ENCODE measurements at regions of chr10 and their contacts with region 1.

Region 1: DNA sequence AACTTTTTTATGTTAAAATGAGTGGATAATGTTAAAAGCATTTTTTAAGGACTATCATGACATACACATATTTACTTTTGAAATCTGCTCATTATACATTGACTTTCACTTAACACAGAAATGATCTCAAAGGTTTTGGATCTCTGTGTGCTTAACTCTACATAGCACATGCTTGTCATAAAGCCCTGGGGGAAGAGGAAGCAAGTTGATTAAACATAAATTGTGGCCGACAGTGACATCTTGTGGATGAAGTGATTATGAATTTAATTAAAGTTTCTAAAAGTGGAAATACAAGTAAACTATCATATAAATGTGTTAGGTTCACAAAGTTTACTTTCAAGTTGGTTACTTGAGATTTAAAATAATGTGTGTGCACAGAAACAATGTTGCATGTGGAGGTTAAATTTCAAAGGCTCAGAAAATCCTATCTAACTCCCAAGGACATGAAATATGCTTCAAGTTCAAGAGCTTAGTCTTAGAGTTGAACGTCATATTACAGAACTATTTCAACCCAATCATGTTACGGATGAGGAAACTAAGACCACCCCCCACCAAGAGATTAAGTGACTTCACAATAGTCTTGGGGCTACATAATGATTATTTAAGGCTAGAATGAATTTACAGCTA is 1247.7 kb downstream of the GATA3 start:
- DNase-seq: peak; percentile 33
- ATAC-seq: peak; percentile 43; the same call in 2 of the 3 replicates
- H3K4me3 ChIP-seq: no peak overlapping the region
- H3K27ac ChIP-seq: no peak overlapping the region
- H3K4me1 ChIP-seq: no peaks in the 10 kb centered on the region
- H3K27me3 ChIP-seq: no peaks in the 10 kb centered on the region
- CTCF ChIP-seq: peak; percentile 42
- EP300 ChIP-seq: no peak
- POLR2A ChIP-seq: no peak
- RAD21 ChIP-seq: no peak

Region 2: DNA sequence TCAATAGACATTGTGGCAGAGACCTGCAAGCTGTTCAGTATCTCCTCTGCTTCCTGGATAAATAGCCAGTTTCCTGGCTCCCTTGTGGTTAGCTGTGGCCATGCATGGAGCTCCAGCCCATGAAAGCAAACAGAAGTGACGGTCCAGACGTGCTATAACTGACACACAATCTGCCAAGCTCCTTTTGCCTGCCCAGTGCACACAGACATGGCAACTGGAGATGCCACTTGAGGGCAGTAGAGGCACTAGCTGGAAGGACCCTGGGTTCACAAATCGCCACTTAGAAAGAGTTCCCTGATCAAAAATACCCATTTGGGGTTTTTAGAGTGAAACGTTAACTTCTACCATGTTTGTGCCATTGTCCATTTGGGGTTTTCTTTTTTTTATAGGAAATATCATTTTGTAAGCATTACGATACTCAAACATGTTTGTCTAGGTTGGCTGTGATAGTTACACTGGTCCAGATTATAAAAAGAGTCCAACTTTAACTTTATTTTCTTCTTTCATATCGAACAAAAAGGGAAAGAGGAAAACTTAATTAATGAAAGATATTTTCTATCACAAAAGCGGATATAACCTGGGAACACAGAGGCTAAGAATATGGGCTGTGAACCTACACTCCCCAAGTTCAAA is 1545.8 kb before region 1 on chr10:
- CTCF ChIA-PET with region 1: interaction called, 3 read pairs
- POLR2A ChIA-PET with region 1: no interaction called
- in situ Hi-C with region 1: loop called (anchors 25 kb)
- intact Hi-C with region 1: loop called (anchors 2 kb)
- DNase-seq: peak; percentile 41
- ATAC-seq: peak; percentile 87
- H3K4me3 ChIP-seq: no peak overlapping the region
- H3K27ac ChIP-seq: no peak overlapping the region
- H3K4me1 ChIP-seq: no peaks in the 10 kb centered on the region
- H3K27me3 ChIP-seq: no peaks in the 10 kb centered on the region
- CTCF ChIP-seq: peak; percentile 73
- EP300 ChIP-seq: no peak
- POLR2A ChIP-seq: no peak
- RAD21 ChIP-seq: peak; percentile 54; the same call in 1 of the 2 replicates

Region 3: DNA sequence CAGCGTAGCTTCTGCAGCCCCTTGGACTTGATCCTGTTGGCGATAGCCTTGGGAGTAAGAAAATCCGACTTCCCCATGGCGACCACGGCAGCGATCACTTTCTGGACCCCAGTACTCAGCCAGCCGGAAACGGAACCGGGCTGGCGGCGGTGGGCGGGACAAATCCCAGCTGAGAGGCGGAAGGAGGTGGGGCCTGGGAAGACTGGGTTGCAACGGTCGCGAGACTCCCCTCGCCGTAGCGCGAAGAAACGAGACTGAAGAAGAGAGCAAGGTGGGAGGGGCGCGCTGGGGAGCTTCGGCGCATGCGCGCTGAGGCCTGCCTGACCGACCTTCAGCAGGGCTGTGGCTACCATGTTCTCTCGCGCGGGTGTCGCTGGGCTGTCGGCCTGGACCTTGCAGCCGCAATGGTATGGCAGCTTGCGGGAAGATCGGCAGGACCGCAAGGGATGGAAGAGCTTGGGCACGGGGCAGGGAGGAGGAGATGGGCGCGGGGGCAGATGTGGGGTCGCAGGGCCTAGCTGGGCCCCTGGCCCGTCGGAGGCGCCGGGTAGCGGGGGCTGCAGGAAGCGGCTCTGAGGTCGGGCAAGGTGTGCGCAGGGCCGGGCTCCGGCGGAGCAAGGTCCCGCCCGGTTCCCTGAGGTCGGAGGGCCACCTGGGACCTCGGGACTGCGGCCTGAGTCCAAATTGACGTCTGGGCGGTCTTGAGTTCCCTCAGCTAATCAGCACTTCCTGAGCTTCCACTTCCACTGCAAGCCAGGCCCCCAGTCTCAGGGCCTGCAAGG is 1514.2 kb before region 1 on chr10 and contains the starts of genes ATP5F1C and KIN:
- CTCF ChIA-PET with region 1: no interaction called
- POLR2A ChIA-PET with region 1: no interaction called
- in situ Hi-C with region 1: no loop called
- intact Hi-C with region 1: loop called (anchors 10 kb)
- DNase-seq: peak; percentile 94
- ATAC-seq: peak; percentile 96
- H3K4me3 ChIP-seq: peak within 1 kb of the TSS; percentile 72 to 99 (median 96)
- H3K27ac ChIP-seq: peak within 1 kb of the TSS; percentile 87
- H3K4me1 ChIP-seq: peaks cover 62% of the 10 kb centered on the region
- H3K27me3 ChIP-seq: no peaks in the 10 kb centered on the region; a peak in 1 of 5 replicates
- CTCF ChIP-seq: no peak
- EP300 ChIP-seq: no peak
- POLR2A ChIP-seq: peak; percentile 90 to 96
- RAD21 ChIP-seq: peak; percentile 45
- total RNA-seq, gene ATP5F1C: 416 and 578 TPM in 2 replicates
- total RNA-seq, gene KIN: 23.2 and 34.6 TPM in 2 replicates

Region 4: GRCh38 chr10:7872041-7872442 is 1430.2 kb before region 1 on chr10:
- CTCF ChIA-PET with region 1: interaction called, 3 read pairs
- POLR2A ChIA-PET with region 1: no interaction called
- in situ Hi-C with region 1: loop called (anchors 10 kb)
- intact Hi-C with region 1: loop called (anchors 2 kb)
- DNase-seq: no peak
- ATAC-seq: no peak
- H3K4me3 ChIP-seq: no peak overlapping the region
- H3K27ac ChIP-seq: no peak overlapping the region
- H3K4me1 ChIP-seq: no peaks in the 10 kb centered on the region
- H3K27me3 ChIP-seq: no peaks in the 10 kb centered on the region
- CTCF ChIP-seq: peak; percentile 57
- EP300 ChIP-seq: no peak
- POLR2A ChIP-seq: no peak
- RAD21 ChIP-seq: peak; percentile 47; the same call in 1 of the 2 replicates

Region 5: GRCh38 chr10:8498884-8499283 is 803.3 kb before region 1 on chr10:
- CTCF ChIA-PET with region 1: no interaction called
- POLR2A ChIA-PET with region 1: no interaction called
- in situ Hi-C with region 1: no loop called
- intact Hi-C with region 1: no loop called
- DNase-seq: no peak
- ATAC-seq: no peak
- H3K4me3 ChIP-seq: no peak overlapping the region
- H3K27ac ChIP-seq: no peak overlapping the region
- H3K4me1 ChIP-seq: no peaks in the 10 kb centered on the region
- H3K27me3 ChIP-seq: peaks cover 0 to 1% of the 10 kb centered on the region in 2 experiments; a peak in 1 of 5 replicates
- CTCF ChIP-seq: no peak
- EP300 ChIP-seq: no peak
- POLR2A ChIP-seq: no peak
- RAD21 ChIP-seq: no peak

Region 6: GRCh38 chr10:9060314-9060713 is 241.9 kb before region 1 on chr10:
- CTCF ChIA-PET with region 1: no interaction called
- POLR2A ChIA-PET with region 1: no interaction called
- in situ Hi-C with region 1: no loop called
- intact Hi-C with region 1: no loop called
- DNase-seq: no peak
- ATAC-seq: no peak
- H3K4me3 ChIP-seq: no peak overlapping the region
- H3K27ac ChIP-seq: no peak overlapping the region
- H3K4me1 ChIP-seq: no peaks in the 10 kb centered on the region
- H3K27me3 ChIP-seq: no peaks in the 10 kb centered on the region
- CTCF ChIP-seq: no peak
- EP300 ChIP-seq: no peak
- POLR2A ChIP-seq: no peak
- RAD21 ChIP-seq: no peak

Region 7: DNA sequence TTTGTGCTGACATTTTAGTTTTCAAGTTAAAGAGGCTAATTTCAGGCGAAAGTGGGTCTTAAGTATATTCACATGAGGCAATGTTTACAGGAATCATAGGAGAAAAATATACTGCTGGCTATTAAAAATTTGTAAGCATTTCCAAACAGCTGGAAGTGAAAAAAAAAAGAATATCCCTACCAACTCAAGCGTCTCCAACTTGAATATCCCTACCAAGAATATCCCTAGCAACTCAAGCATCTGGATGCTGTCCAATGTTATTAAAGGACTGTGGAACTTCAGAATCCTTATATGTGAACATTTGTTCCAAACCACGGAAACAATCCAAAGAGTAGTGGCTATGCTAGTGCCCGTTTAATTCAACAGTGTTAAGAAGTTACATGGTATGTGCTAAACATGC is 55.2 kb after region 1 on chr10:
- CTCF ChIA-PET with region 1: no interaction called
- POLR2A ChIA-PET with region 1: no interaction called
- in situ Hi-C with region 1: no loop called
- intact Hi-C with region 1: no loop called
- DNase-seq: no peak
- ATAC-seq: no peak
- H3K4me3 ChIP-seq: no peak overlapping the region
- H3K27ac ChIP-seq: no peak overlapping the region
- H3K4me1 ChIP-seq: no peaks in the 10 kb centered on the region
- H3K27me3 ChIP-seq: no peaks in the 10 kb centered on the region
- CTCF ChIP-seq: no peak
- EP300 ChIP-seq: no peak
- POLR2A ChIP-seq: no peak
- RAD21 ChIP-seq: no peak

Region 8: GRCh38 chr10:9709849-9710248 is 407.6 kb after region 1 on chr10:
- CTCF ChIA-PET with region 1: no interaction called
- POLR2A ChIA-PET with region 1: no interaction called
- in situ Hi-C with region 1: no loop called
- intact Hi-C with region 1: no loop called
- DNase-seq: no peak
- ATAC-seq: no peak
- H3K4me3 ChIP-seq: no peak overlapping the region
- H3K27ac ChIP-seq: no peak overlapping the region
- H3K4me1 ChIP-seq: no peaks in the 10 kb centered on the region
- H3K27me3 ChIP-seq: no peaks in the 10 kb centered on the region
- CTCF ChIP-seq: no peak
- EP300 ChIP-seq: no peak
- POLR2A ChIP-seq: no peak
- RAD21 ChIP-seq: no peak

Measured in HepG2 (cell line).